ENCODE measurements at regions of chr18 and their contacts with region 1.

Region 1: GRCh38 chr18:7824970-7825369 is 257.9 kb downstream of the PTPRM start:
- DNase-seq: no peak
- H3K4me3 ChIP-seq: no peak overlapping the region
- H3K27ac ChIP-seq: no peak overlapping the region
- H3K4me1 ChIP-seq: no peaks in the 10 kb centered on the region
- H3K27me3 ChIP-seq: no peaks in the 10 kb centered on the region
- CTCF ChIP-seq: no peak
- POLR2A ChIP-seq: no peak

Region 2: DNA sequence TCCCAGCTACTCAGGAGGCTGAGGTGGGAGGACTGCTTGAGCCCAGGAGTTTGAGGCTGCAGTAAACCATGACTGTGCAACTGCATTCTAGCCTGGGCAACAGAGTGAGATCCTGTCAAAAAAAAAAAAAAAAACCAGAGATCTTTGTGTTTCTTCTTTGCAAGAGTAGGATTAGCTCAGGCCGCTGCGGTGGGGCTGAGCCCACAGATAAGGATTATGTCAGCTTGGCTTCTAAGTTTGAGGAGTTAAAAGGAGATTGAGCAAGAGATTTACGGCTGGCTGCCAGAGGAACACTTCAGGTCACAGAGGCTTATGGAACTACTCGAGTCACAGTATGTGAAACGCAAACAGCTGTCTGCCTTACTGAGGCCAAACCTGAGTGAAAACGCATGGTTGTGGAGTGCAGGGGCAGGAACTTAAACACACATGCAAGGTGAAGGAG is 1263.5 kb before region 1 on chr18:
- intact Hi-C with region 1: no loop called
- DNase-seq: peak in 1 of 2 donors; percentile 30
- H3K4me3 ChIP-seq: no peak overlapping the region
- H3K27ac ChIP-seq: no peak overlapping the region
- H3K4me1 ChIP-seq: no peaks in the 10 kb centered on the region
- H3K27me3 ChIP-seq: no peaks in the 10 kb centered on the region
- CTCF ChIP-seq: no peak
- POLR2A ChIP-seq: no peak

Region 3: GRCh38 chr18:7803956-7804469 is 21.0 kb before region 1 on chr18:
- intact Hi-C with region 1: loop called (anchors 1 kb)
- DNase-seq: no peak
- H3K4me3 ChIP-seq: no peak overlapping the region
- H3K27ac ChIP-seq: no peak overlapping the region
- H3K4me1 ChIP-seq: no peaks in the 10 kb centered on the region
- H3K27me3 ChIP-seq: no peaks in the 10 kb centered on the region
- CTCF ChIP-seq: no peak
- POLR2A ChIP-seq: no peak